Caco-2 (cell line): ENCODE measurements at regions of chr9 and their contacts with region 1.

Region 1: DNA sequence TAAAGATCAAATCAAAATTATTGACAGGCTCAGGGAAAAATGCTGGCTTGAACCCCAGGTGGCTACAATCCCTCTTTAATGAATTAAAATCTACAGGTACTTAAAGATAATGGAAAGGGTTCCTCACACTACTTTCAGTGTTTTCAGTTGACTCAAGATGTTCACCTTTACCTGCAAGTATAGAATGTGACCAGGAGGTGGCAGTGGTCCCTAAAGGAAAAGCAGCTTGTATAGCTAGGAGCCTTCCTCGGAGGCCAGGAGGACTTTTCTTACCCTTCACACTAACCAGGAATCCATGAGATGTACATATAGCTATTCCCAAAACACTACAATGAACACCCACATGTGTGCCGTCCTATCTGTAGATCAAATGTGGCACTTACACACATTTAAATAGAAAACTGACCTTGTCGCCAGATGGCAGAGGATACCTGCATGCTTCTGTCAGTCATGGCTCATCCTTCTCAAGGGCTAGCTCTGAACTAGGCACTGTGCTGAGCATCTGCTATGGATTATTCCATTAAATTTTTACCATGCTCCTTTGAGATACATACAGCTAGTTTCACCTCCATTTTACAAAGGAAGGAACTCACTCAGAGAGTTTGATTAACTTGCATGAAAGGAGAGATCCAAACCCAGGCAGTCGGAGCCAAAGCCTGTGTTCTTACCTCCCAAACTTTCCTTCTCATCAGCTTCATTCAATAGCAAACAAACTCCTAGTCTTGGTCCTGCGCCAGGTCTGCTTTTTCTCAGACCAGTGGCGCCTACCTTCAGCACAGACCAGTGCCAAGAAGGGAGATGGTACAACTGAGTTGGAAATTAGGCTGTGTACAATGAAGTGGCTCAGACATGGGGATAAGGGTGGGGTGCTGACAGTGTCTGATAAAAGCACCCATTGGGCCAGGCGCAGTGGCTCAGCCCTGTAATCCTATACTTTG is 24.5 kb downstream of the C9orf152 start:
- DNase-seq: peak; percentile 79 to 81
- H3K4me3 ChIP-seq: no peak overlapping the region
- H3K4me3 Mint-ChIP-seq: no peak overlapping the region
- H3K27ac Mint-ChIP-seq: no peak overlapping the region
- H3K4me1 ChIP-seq: no peaks in the 10 kb centered on the region
- H3K4me1 Mint-ChIP-seq: no peaks in the 10 kb centered on the region
- H3K27me3 ChIP-seq: no peaks in the 10 kb centered on the region
- H3K27me3 Mint-ChIP-seq: no peaks in the 10 kb centered on the region
- CTCF ChIP-seq: peak; percentile 70 to 87

Region 2: GRCh38 chr9:110241260-110241857 is 57.9 kb after region 1 on chr9:
- CTCF ChIA-PET with region 1: no interaction called
- POLR2A ChIA-PET with region 1: no interaction called
- intact Hi-C with region 1: no loop called
- DNase-seq: no peak
- H3K4me3 ChIP-seq: no peak overlapping the region
- H3K4me3 Mint-ChIP-seq: no peak overlapping the region
- H3K27ac Mint-ChIP-seq: no peak overlapping the region
- H3K4me1 ChIP-seq: peaks cover 15% of the 10 kb centered on the region
- H3K4me1 Mint-ChIP-seq: no peaks in the 10 kb centered on the region
- H3K27me3 ChIP-seq: no peaks in the 10 kb centered on the region
- H3K27me3 Mint-ChIP-seq: no peaks in the 10 kb centered on the region
- CTCF ChIP-seq: no peak

Region 3: DNA sequence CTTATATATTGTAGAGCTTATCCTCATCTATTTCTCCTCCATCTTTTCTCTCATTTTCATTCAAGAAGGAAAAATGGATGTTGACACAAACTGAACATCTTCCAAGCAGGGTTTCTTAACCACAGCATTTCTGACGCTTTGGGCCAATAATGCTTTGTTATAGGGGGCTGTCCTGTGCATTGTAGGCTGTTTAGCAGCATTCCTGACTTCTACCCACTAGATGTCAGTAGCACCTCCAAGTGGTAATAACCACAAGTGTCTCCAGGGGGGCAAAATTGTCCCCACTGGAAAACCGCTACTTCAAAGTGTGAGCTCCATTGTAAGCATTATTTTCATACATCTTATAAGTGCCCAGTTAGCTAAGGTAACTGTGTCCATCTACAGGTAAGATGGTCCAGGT is 156.8 kb after region 1 on chr9:
- CTCF ChIA-PET with region 1: interaction called, 11 read pairs
- POLR2A ChIA-PET with region 1: no interaction called
- intact Hi-C with region 1: loop called (anchors 1 kb)
- DNase-seq: peak in 1 of 2 experiments; percentile 32
- H3K4me3 ChIP-seq: no peak overlapping the region
- H3K4me3 Mint-ChIP-seq: no peak overlapping the region
- H3K27ac Mint-ChIP-seq: no peak overlapping the region
- H3K4me1 ChIP-seq: no peaks in the 10 kb centered on the region; the same call in 1 of the 2 replicates
- H3K4me1 Mint-ChIP-seq: no peaks in the 10 kb centered on the region
- H3K27me3 ChIP-seq: no peaks in the 10 kb centered on the region
- H3K27me3 Mint-ChIP-seq: no peaks in the 10 kb centered on the region
- CTCF ChIP-seq: peak; percentile 49 to 56

Region 4: GRCh38 chr9:110427497-110428104 is 244.1 kb after region 1 on chr9:
- CTCF ChIA-PET with region 1: interaction called, 3 read pairs
- POLR2A ChIA-PET with region 1: no interaction called
- intact Hi-C with region 1: loop called (anchors 5 kb)
- DNase-seq: peak; percentile 46 to 50
- H3K4me3 ChIP-seq: no peak overlapping the region
- H3K4me3 Mint-ChIP-seq: no peak overlapping the region
- H3K27ac Mint-ChIP-seq: no peak overlapping the region
- H3K4me1 ChIP-seq: peaks cover 6% of the 10 kb centered on the region; the same call in 1 of the 2 replicates
- H3K4me1 Mint-ChIP-seq: no peaks in the 10 kb centered on the region
- H3K27me3 ChIP-seq: no peaks in the 10 kb centered on the region
- H3K27me3 Mint-ChIP-seq: no peaks in the 10 kb centered on the region
- CTCF ChIP-seq: peak; percentile 34 to 53